Esophagus muscularis mucosa (tissue), 4 donors: ENCODE measurements at regions of chr19 and their contacts with region 1.

Region 1: DNA sequence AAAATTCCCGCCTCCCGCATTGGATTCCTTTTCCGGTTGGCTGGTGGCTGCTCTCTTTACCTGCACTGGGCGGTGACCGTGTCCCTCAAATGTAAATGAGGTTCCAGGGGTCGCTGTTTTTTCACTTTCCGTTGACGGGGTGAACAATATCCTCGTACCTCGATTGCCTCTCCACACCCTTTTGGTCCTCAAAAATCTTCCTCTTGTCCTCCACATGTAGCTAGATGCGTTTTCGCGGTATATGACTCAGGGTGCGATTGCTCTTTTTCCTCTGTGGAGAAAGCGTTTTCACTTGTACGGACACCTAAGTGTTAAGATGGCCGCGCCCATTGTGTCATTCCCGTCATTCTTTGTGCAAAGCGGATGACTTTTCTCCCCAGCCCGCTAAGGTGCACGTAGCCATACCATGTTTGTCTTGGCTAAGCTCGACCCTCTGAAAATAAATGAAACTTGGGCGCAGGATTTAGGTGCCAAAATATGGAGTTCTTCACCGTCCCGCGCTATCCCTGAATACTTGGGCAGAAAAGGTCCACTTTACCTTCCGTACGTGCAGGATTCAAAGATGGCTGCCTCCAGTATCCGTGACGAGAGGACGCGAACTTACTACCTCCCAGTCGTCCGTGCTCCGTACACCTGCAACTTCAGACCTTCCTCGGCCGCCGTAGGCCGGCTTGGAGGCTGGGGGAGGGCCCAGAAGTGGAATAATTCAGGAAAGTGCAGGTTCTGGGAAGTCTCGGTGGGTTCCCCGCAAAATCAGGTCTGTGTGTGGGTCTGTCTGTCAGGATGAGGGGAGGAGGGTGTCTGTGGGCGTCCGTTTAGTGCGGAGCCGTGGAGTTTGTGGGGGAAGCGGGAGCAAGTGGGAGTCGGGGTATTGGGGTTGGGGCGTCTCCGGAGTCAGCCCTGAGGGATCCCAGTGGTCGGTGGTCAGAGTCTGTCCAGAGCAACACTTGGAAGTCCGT is at the start of gene ZNF613:
- DNase-seq: peak; percentile 96
- H3K4me3 ChIP-seq: peak within 1 kb of the TSS; percentile 66 to 89 (median 85)
- H3K27ac ChIP-seq: peak within 1 kb of the TSS; percentile 82 to 90 (median 86)
- H3K4me1 ChIP-seq: peaks cover 10 to 17% (median 15%) of the 10 kb centered on the region in 4 donors
- H3K27me3 ChIP-seq: no peaks in the 10 kb centered on the region
- CTCF ChIP-seq: peak in 2 of 3 experiments; percentile 4 to 15
- EP300 ChIP-seq: no peak
- POLR2A ChIP-seq: no peak
- total RNA-seq, gene ZNF613: 4.2 to 8.3 (median 5.5) TPM

Region 2: DNA sequence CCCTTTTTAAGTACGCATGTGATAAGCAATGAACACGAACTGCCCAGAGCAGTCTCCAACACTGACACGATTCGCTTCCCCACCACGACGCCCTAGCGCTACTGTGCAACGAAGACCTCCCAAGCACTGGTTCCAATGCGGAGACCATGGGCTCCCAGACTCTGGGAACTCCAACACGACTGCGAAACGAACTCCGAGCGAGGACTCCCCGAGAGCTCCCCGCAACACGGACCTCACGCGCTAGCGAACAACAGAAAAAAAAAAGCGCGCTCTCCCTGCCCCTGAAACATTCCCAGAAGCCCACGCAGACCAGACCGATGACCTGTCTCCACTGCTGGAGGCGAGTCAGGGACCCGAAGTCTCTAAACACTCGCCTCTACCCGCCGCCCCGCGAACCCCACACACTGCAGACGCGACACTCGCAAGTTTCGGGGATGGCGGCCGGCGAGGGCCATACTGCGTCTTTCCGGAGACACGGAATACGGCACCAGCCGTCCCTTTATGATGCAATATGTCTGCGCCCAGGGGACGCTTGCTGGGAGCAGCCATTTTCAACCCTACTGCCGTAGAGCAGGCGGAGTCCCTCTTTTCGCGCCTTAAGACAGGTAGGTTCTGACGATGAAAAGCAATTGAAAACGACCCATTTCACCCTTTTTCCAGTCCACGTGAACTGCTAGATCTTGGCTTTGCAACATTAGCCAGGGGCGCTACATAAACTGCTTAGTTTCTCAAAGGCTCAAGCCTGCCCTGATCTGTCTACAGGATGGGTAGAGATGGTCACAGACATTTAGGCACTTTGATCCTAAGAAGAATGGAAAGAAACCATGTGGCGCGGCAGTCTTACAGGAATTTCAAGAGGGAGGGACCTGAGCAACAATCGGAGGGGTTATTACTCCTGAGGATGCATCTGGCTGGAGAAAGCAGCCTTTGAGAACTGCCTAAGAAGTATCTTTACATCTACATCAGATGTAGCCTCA is 39.3 kb before region 1 on chr19 and contains the start of gene ZNF577:
- intact Hi-C with region 1: loop called (anchors 5 kb)
- DNase-seq: peak; percentile 93
- H3K4me3 ChIP-seq: peak within 1 kb of the TSS; percentile 66 to 77 (median 70)
- H3K27ac ChIP-seq: peak within 1 kb of the TSS; percentile 80 to 85 (median 82)
- H3K4me1 ChIP-seq: peaks cover 0 to 15% (median 14%) of the 10 kb centered on the region in 4 donors
- H3K27me3 ChIP-seq: no peaks in the 10 kb centered on the region
- CTCF ChIP-seq: peak in 1 of 3 experiments; percentile 24
- EP300 ChIP-seq: no peak
- POLR2A ChIP-seq: no peak
- total RNA-seq, gene ZNF577: 8.4 to 29.1 (median 11.5) TPM

Region 3: GRCh38 chr19:51904331-51905165 is 22.5 kb before region 1 on chr19 and contains the start of gene ZNF649:
- intact Hi-C with region 1: loop called (anchors 2 kb)
- DNase-seq: peak; percentile 92
- H3K4me3 ChIP-seq: peak within 1 kb of the TSS; percentile 66 to 72 (median 70)
- H3K27ac ChIP-seq: peak within 1 kb of the TSS; percentile 81 to 88 (median 86)
- H3K4me1 ChIP-seq: peaks cover 8 to 20% (median 15%) of the 10 kb centered on the region in 4 donors
- H3K27me3 ChIP-seq: peaks cover 0 to 30% (median 0%) of the 10 kb centered on the region in 4 donors
- CTCF ChIP-seq: no peak
- EP300 ChIP-seq: no peak
- POLR2A ChIP-seq: no peak
- total RNA-seq, gene ZNF649: 9.1 to 15.0 (median 13.6) TPM

Region 4: DNA sequence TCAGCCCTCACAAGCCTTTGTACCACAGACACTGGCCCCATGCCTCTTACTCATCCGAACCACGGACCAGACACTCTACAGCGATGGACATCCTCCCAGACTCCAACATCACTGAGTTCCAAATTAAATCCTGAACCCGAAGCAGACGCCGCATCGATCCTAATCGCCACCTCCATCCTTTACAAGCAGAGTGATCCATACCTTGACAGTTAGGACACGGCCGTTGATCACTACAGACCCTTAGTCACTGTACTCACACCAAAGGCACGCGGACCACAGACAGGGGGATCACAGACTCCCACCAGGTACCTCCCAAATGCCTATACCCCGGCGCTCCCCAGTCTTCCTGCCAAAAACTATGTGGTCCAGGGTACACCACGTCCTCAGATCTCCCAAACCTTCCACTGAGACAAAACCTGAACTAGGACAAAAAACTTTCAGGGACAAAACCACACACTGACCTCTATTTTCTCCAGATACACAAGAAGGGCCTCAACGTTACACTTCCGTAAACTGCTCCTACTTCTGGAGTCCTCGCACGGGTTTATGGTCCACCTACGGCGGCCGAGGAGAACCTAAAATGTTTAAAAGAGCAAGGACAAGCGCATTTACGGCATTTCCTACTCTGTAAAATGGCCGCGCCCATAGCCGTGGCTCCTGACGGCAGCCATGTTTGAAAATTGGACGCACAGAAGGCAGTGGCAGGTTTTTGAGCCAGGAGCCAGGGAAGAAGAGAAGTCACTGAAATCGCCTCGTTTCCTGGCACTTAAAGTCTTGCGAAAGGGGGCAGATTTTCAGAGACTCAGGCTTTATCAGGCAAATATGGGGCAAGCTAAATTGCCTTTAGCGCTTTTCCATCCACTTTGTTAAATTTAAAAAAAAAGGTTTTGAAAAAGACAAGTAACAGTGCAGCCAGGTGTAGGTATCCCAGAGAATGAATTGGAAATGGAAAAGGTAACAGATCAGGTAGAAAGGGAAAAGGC is 59.5 kb after region 1 on chr19 and contains the start of gene ZNF350:
- intact Hi-C with region 1: loop called (anchors 2 kb)
- DNase-seq: peak; percentile 94
- H3K4me3 ChIP-seq: peak within 1 kb of the TSS; percentile 77 to 86 (median 80)
- H3K27ac ChIP-seq: peak within 1 kb of the TSS; percentile 79 to 81 (median 80)
- H3K4me1 ChIP-seq: peaks cover 10 to 18% (median 13%) of the 10 kb centered on the region in 4 donors
- H3K27me3 ChIP-seq: no peaks in the 10 kb centered on the region
- CTCF ChIP-seq: no peak
- EP300 ChIP-seq: no peak
- POLR2A ChIP-seq: no peak
- total RNA-seq, gene ZNF350: 9.2 to 14.6 (median 12.7) TPM